Esophagus muscularis mucosa (tissue), 4 donors: ENCODE measurements at regions of chr11 and their contacts with region 1.

Region 1: GRCh38 chr11:48109046-48109666 is 107.5 kb upstream of the OR4B1 start:
- DNase-seq: peak; percentile 24
- H3K4me3 ChIP-seq: peak overlapping the region in 3 of 4 donors; percentile 15 to 48 (median 33)
- H3K27ac ChIP-seq: peak overlapping the region in 2 of 4 donors; percentile 4 to 39
- H3K4me1 ChIP-seq: peaks cover 11 to 30% (median 15%) of the 10 kb centered on the region in 4 donors
- H3K27me3 ChIP-seq: no peaks in the 10 kb centered on the region
- CTCF ChIP-seq: peak in 2 of 3 experiments; percentile 31 to 42
- EP300 ChIP-seq: no peak
- POLR2A ChIP-seq: no peak

Region 2: GRCh38 chr11:47928426-47928825 is 180.7 kb before region 1 on chr11:
- intact Hi-C with region 1: loop called (anchors 1 kb)
- DNase-seq: no peak
- H3K4me3 ChIP-seq: no peak overlapping the region
- H3K27ac ChIP-seq: no peak overlapping the region
- H3K4me1 ChIP-seq: peaks cover 7 to 12% (median 10%) of the 10 kb centered on the region in 4 donors
- H3K27me3 ChIP-seq: no peaks in the 10 kb centered on the region
- CTCF ChIP-seq: no peak
- EP300 ChIP-seq: no peak
- POLR2A ChIP-seq: no peak

Region 3: GRCh38 chr11:48063424-48063978 is 45.7 kb before region 1 on chr11:
- intact Hi-C with region 1: loop called (anchors 5 kb)
- DNase-seq: no peak
- H3K4me3 ChIP-seq: no peak overlapping the region
- H3K27ac ChIP-seq: peak overlapping the region; percentile 64 to 71 (median 70)
- H3K4me1 ChIP-seq: peaks cover 15 to 41% (median 30%) of the 10 kb centered on the region in 4 donors
- H3K27me3 ChIP-seq: no peaks in the 10 kb centered on the region
- CTCF ChIP-seq: no peak
- EP300 ChIP-seq: no peak
- POLR2A ChIP-seq: no peak